ENCODE measurements at regions of chr19 and their contacts with region 1.

Region 1: GRCh38 chr19:17938092-17938845 is 5.5 kb downstream of the CCDC124 start:
- DNase-seq: peak; percentile 37
- H3K4me3 ChIP-seq: no peak overlapping the region
- H3K27me3 ChIP-seq: no peaks in the 10 kb centered on the region
- CTCF ChIP-seq: peak; percentile 96

Region 2: DNA sequence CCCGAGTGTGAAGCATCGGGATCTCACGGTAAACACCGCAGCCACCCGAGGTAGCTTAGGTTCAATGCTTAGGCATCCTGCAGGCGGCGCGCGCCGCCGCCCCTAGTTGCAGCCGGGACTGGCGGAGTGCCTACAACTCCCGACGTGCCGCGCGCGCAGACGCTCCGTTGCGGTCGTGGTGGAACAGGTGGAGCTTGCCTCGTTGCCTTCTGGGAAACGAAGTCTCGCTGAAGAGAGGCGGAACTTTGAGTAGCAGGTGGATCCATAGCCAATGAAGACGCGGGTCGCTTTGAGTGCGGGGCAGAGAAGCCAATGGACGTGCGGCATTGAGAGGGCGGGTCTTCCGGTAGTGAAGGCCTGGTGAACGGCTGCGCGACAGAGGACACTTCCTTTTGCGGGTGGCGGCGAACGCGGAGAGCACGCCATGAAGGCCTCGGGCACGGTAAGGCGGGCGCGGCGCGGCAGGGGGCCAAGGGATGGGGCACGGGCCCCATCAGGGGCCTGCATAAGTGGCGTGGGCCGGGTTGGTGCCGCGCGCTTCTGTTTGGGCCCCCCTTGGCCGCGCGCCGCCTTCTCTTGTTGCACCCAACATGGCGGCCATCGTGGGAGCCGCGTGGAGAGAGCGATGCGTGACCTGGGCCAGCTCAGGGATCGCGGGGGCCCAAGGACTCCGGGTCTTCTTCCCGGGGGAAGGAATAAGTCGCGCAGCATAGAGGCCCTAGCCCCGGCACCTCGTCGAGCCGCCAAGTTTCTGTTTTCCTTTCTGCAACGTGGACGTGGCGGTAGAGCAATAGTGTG is 78.5 kb before region 1 on chr19 and contains the start of gene RPL18A:
- CTCF ChIA-PET with region 1: interaction called, 54 read pairs
- POLR2A ChIA-PET with region 1: interaction called, 13 read pairs
- DNase-seq: peak; percentile 99
- H3K4me3 ChIP-seq: peak within 1 kb of the TSS; percentile 98
- H3K27me3 ChIP-seq: no peaks in the 10 kb centered on the region
- CTCF ChIP-seq: peak; percentile 94
- polyA plus RNA-seq, gene RPL18A: 1,501 and 2,264 TPM in 2 replicates

Region 3: GRCh38 chr19:17873786-17874757 is 64.2 kb before region 1 on chr19:
- CTCF ChIA-PET with region 1: interaction called, 111 read pairs
- POLR2A ChIA-PET with region 1: no interaction called
- DNase-seq: no peak
- H3K4me3 ChIP-seq: no peak overlapping the region
- H3K27me3 ChIP-seq: peaks cover 28% of the 10 kb centered on the region
- CTCF ChIP-seq: no peak

Region 4: GRCh38 chr19:17953869-17954268 is 15.6 kb after region 1 on chr19:
- CTCF ChIA-PET with region 1: interaction called, 16 read pairs
- POLR2A ChIA-PET with region 1: no interaction called
- DNase-seq: no peak
- H3K4me3 ChIP-seq: no peak overlapping the region
- H3K27me3 ChIP-seq: peaks cover 45% of the 10 kb centered on the region
- CTCF ChIP-seq: no peak

Region 5: GRCh38 chr19:18000935-18001778 is 62.9 kb after region 1 on chr19:
- CTCF ChIA-PET with region 1: interaction called, 169 read pairs
- POLR2A ChIA-PET with region 1: interaction called, 3 read pairs
- DNase-seq: peak; percentile 42
- H3K4me3 ChIP-seq: peak overlapping the region; percentile 87
- H3K27me3 ChIP-seq: no peaks in the 10 kb centered on the region
- CTCF ChIP-seq: no peak

Region 6: GRCh38 chr19:18058208-18059030 is 120.2 kb after region 1 on chr19:
- CTCF ChIA-PET with region 1: interaction called, 15 read pairs
- POLR2A ChIA-PET with region 1: no interaction called
- DNase-seq: no peak
- H3K4me3 ChIP-seq: no peak overlapping the region
- H3K27me3 ChIP-seq: no peaks in the 10 kb centered on the region; the same call in 1 of the 2 replicates
- CTCF ChIP-seq: peak; percentile 90

Region 7: DNA sequence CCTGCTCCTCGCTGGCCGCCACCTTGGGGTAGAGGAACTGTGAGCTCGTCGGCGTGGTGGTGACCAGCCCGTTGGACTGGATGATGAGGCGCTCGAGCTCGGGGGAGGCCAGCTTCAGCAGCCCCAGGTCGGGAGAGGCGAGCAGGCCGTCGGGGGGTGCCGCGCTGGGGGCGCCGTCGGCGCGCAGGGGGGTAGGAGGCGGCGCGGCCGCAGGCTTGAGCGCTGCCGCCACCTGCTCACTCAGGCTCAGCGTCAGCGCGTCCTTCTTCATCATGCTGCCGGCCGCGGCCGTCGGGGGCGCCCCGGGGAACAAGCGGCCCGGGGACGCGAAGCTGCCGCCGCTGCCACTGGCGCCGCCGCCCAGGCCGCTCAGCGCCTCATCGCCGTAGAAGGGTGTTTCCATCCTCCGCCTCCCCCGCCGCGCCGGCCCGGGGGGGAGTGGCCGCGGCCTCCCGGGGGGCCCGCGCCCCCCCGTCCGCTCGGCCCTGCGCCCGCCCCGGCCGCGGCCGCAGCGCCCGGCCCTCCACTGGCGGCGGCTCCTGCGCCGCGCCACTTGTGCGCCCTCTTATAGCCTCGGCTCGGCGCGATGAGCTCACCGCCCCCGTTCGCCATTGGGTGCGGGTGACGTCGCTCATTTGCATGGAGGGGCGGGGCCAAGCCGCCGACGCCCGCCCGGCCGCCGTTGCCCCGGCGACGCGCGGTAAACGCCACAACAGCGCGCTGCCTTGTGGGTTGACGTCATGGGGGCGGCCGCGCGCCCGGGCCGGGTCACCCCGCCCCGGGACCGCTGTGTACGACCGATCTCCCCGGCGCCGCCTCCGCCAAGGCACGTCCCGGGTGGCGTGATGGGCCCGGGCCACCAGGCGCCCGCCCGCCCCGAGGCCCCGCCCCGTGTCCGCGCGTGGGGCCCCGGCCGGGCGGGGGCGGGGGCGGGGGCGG is 343.1 kb after region 1 on chr19 and contains the start of gene JUND:
- CTCF ChIA-PET with region 1: no interaction called
- POLR2A ChIA-PET with region 1: no interaction called
- DNase-seq: peak; percentile 84
- H3K4me3 ChIP-seq: peak within 1 kb of the TSS; percentile 87
- H3K27me3 ChIP-seq: no peaks in the 10 kb centered on the region
- CTCF ChIP-seq: no peak
- polyA plus RNA-seq, gene JUND: 92.0 and 124 TPM in 2 replicates

Measured in BJ (cell line).